Activated T-helper 1 cell treated with anti-CD3 and anti-CD28 coated beads, Interleukin-12 subunit alpha, Interleukin-12 subunit beta, Interleukin-2, Interleukin-4 antibody, amounts not matched to agents 30 ng/mL and 10 ng/mL and 1 ng/mL, durations not matched to agents 14 hours and 24 hours and 36 hours (primary cell): ENCODE measurements at regions of chr1 and their contacts with region 1.

Region 1: GRCh38 chr1:10430216-10431069 is at the start of gene CENPS:
- DNase-seq: peak; percentile 86
- H3K4me3 Mint-ChIP-seq: peak within 1 kb of the TSS; percentile 92
- H3K27ac Mint-ChIP-seq: peak within 1 kb of the TSS; percentile 92
- H3K4me1 Mint-ChIP-seq: peaks cover 24% of the 10 kb centered on the region
- H3K27me3 Mint-ChIP-seq: no peaks in the 10 kb centered on the region
- total RNA-seq, gene CENPS: 22.1 and 23.4 TPM in 2 replicates

Region 2: GRCh38 chr1:9874959-9875635 is 555.3 kb before region 1 on chr1:
- intact Hi-C with region 1: loop called (anchors 1 kb)
- DNase-seq: peak; percentile 60
- H3K4me3 Mint-ChIP-seq: no peak overlapping the region
- H3K27ac Mint-ChIP-seq: no peak overlapping the region
- H3K4me1 Mint-ChIP-seq: peaks cover 7% of the 10 kb centered on the region
- H3K27me3 Mint-ChIP-seq: no peaks in the 10 kb centered on the region

Region 3: GRCh38 chr1:10267319-10267718 is 163.1 kb before region 1 on chr1:
- intact Hi-C with region 1: no loop called
- DNase-seq: no peak
- H3K4me3 Mint-ChIP-seq: no peak overlapping the region
- H3K27ac Mint-ChIP-seq: no peak overlapping the region
- H3K4me1 Mint-ChIP-seq: no peaks in the 10 kb centered on the region
- H3K27me3 Mint-ChIP-seq: no peaks in the 10 kb centered on the region

Region 4: GRCh38 chr1:10378081-10378841 is 52.2 kb before region 1 on chr1:
- intact Hi-C with region 1: loop called (anchors 1 kb)
- DNase-seq: no peak
- H3K4me3 Mint-ChIP-seq: no peak overlapping the region
- H3K27ac Mint-ChIP-seq: no peak overlapping the region
- H3K4me1 Mint-ChIP-seq: no peaks in the 10 kb centered on the region
- H3K27me3 Mint-ChIP-seq: no peaks in the 10 kb centered on the region

Region 5: DNA sequence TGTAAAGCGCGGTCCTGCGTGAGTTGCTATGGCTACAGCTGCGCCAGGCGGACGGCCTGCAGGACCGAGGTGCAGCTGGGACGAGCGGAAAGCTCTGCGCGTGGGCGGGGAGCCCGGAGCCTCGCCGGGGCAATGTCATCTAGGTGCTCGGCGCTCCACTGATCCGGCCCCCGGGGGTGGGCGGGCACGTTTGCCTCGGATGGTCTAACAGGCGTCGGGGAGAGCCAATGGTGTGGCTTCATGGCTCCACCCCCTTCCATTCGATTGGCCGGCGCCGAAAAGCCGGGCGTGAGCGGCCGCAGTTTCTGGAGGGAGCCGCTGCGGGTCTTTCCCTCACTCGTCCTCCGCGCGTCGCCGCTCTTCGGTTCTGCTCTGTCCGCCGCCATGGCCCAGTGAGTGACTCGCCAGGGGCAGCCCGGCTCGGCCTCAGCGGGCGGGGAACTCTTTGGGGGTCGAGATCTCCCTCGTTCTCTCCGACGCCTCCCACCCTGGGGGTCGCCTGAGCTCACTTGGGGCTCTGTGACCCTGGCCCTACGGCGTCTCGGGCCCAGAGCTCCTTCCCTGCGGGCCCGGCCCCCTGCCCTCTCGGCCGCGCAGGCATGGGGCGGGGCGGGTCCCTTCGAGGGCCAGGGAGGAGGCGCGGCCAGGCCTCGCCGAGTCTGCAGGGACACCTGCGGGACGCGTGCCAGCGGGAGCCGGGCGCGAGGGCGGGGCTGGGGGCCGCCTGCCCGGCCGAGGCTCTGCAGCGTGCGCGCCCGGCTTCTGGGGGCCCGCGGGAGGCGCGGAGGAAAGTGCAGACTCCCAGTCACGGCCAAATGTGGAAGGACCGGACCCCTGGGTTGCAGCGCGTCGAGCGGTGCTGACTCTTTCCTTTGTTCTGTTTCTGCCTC is 31.5 kb before region 1 on chr1 and contains the start of gene PGD:
- intact Hi-C with region 1: loop called (anchors 1 kb)
- DNase-seq: peak; percentile 98
- H3K4me3 Mint-ChIP-seq: peak within 1 kb of the TSS; percentile 92
- H3K27ac Mint-ChIP-seq: peak within 1 kb of the TSS; percentile 77
- H3K4me1 Mint-ChIP-seq: peaks cover 25% of the 10 kb centered on the region
- H3K27me3 Mint-ChIP-seq: no peaks in the 10 kb centered on the region
- total RNA-seq, gene PGD: 131 and 142 TPM in 2 replicates

Region 6: GRCh38 chr1:10472220-10473144 is 42.0 kb after region 1 on chr1 and contains the start of gene DFFA:
- intact Hi-C with region 1: loop called (anchors 1 kb)
- DNase-seq: peak; percentile 90
- H3K4me3 Mint-ChIP-seq: peak within 1 kb of the TSS; percentile 89
- H3K27ac Mint-ChIP-seq: peak within 1 kb of the TSS; percentile 85
- H3K4me1 Mint-ChIP-seq: peaks cover 45% of the 10 kb centered on the region
- H3K27me3 Mint-ChIP-seq: no peaks in the 10 kb centered on the region
- total RNA-seq, gene DFFA: 54.7 and 60.1 TPM in 2 replicates